CD4-positive, alpha-beta T cell (primary cell): ENCODE measurements at regions of chrX and their contacts with region 1.

Region 1: DNA sequence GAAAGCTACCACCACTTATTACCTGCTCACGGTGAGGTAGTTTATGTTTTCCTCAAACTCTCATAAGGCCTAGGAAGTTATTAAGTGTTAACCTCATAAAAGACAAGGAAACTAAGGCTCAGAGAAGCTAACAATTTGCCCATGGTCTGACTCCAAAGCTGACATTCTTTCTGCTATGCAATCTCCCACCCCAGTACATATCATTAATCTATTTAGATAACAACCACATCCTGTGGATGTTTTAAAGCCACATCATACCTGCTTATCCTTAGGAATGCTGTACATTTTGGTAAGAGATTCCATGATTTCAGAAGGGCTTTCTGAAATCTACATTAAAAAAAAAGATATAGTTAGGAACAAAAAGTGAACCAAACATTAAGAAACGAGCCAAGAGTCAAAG is 55.4 kb downstream of the HUWE1 start:
- DNase-seq: no peak
- ATAC-seq: no peak
- H3K4me3 ChIP-seq: no peak overlapping the region
- H3K4me3 Mint-ChIP-seq: no peak overlapping the region
- H3K27ac ChIP-seq: no peak overlapping the region
- H3K27ac Mint-ChIP-seq: no peak overlapping the region
- H3K4me1 ChIP-seq: no peaks in the 10 kb centered on the region
- H3K4me1 Mint-ChIP-seq: peaks cover 7% of the 10 kb centered on the region
- H3K27me3 ChIP-seq: no peaks in the 10 kb centered on the region
- H3K27me3 Mint-ChIP-seq: no peaks in the 10 kb centered on the region
- CTCF ChIP-seq: no peak

Region 2: DNA sequence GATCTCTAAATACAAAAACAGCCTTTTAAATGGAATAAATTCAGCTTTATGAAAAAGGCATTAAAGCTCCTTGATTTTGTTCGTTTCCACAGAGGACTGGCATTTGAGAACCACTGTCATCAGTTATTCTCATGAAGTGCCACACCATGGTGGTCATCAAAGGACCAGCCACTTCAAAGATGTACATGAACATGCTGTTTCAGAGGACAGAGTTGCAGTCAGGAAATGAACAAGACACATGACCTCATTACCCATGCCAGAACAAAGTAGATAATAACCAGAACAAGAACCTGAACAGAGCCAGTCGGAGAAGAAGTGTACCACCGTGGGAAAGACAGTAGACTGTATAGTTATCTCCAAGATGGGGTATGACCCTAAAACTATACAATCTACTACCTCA is 74.3 kb before region 1 on chrX:
- CTCF ChIA-PET with region 1: no interaction called
- POLR2A ChIA-PET with region 1: no interaction called
- intact Hi-C with region 1: no loop called
- DNase-seq: no peak
- ATAC-seq: no peak
- H3K4me3 ChIP-seq: no peak overlapping the region
- H3K4me3 Mint-ChIP-seq: no peak overlapping the region
- H3K27ac ChIP-seq: no peak overlapping the region
- H3K27ac Mint-ChIP-seq: peak overlapping the region; percentile 28
- H3K4me1 ChIP-seq: no peaks in the 10 kb centered on the region
- H3K4me1 Mint-ChIP-seq: no peaks in the 10 kb centered on the region
- H3K27me3 ChIP-seq: no peaks in the 10 kb centered on the region
- H3K27me3 Mint-ChIP-seq: no peaks in the 10 kb centered on the region
- CTCF ChIP-seq: no peak

Region 3: GRCh38 chrX:53595266-53595810 is 35.8 kb before region 1 on chrX:
- CTCF ChIA-PET with region 1: no interaction called
- POLR2A ChIA-PET with region 1: no interaction called
- intact Hi-C with region 1: loop called in 1 of 2 experiments (anchors 5 kb)
- DNase-seq: peak in 1 of 14 experiments; percentile 1
- ATAC-seq: no peak
- H3K4me3 ChIP-seq: no peak overlapping the region
- H3K4me3 Mint-ChIP-seq: no peak overlapping the region
- H3K27ac ChIP-seq: no peak overlapping the region
- H3K27ac Mint-ChIP-seq: no peak overlapping the region
- H3K4me1 ChIP-seq: no peaks in the 10 kb centered on the region
- H3K4me1 Mint-ChIP-seq: no peaks in the 10 kb centered on the region
- H3K27me3 ChIP-seq: no peaks in the 10 kb centered on the region
- H3K27me3 Mint-ChIP-seq: no peaks in the 10 kb centered on the region
- CTCF ChIP-seq: no peak

Region 4: DNA sequence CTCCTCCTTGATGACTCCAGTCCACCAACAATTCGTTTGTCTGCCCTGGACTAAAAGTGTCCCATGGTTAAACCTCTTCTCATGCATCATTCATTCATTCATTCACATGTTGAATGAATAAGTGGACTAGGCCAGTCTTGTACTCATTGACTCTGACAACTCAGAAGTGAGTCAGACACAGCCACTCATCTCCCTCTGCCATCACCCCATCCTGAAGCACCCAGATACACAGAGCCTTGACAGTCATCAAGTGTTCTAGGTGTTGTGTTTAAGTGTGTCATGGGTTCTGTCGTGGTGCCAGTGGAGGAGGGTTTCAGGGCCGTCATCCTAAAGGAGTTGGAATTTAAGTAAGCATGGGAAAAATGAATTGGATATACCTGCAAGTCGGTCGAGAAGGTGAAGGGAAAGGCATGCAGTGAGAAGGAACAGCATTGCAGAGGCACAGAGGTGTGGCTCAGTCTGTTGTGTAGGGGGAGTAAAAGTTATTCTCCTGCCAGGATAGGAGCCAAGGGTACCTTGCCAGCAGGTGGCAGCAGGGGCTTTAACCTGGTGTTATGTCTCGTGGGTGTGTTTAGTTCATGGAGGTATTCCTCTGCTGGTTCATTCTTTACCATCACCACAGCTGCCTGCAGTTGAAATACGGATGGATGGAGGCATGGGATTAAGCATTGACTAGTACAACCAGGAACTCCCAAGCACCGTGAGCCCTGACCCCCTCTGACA is 1194.7 kb after region 1 on chrX:
- CTCF ChIA-PET with region 1: no interaction called
- POLR2A ChIA-PET with region 1: no interaction called
- intact Hi-C with region 1: no loop called
- DNase-seq: peak in 12 of 14 experiments; percentile 16 to 47 (median 34)
- ATAC-seq: peak; percentile 71
- H3K4me3 ChIP-seq: no peak overlapping the region
- H3K4me3 Mint-ChIP-seq: no peak overlapping the region
- H3K27ac ChIP-seq: no peak overlapping the region
- H3K27ac Mint-ChIP-seq: no peak overlapping the region
- H3K4me1 ChIP-seq: no peaks in the 10 kb centered on the region
- H3K4me1 Mint-ChIP-seq: no peaks in the 10 kb centered on the region
- H3K27me3 ChIP-seq: no peaks in the 10 kb centered on the region
- H3K27me3 Mint-ChIP-seq: no peaks in the 10 kb centered on the region
- CTCF ChIP-seq: peak; percentile 30